ENCODE measurements at regions of chrX and their contacts with region 1.

Region 1: DNA sequence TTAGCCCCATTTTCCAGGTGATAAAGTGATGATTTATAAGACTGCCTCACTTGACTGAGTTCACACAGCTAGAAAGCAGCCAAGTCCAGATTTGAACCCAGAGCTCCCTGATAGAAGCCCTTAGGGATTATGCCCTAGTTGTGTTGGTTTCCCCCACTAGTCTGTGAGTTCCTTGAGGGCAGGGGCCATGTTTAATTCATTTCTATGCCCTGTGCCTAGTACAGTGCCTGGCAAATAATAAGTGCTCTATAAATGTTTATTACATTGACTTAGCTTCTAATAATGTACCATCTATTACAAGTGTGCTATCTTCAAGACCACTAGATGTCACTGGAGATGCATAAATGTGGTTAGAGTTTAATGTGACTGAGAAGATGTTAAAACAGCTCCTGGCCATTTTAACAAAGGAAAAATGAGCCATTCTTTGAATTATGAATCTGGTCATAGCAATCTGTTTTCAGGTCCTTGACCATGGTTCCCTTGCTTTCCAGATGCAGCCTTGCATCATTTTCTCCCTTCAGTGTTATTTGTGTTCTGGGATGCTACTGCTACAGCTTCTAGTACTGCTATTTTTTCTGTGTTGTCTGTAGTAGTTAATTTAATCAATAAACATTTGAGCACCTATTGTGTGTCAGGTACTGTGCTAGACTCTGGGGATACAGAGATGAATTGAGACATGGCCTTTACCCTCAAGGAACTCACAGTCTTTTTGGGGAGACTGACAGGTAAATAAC is 43.2 kb downstream of the SLC9A6 start:
- DNase-seq: peak; percentile 28 to 55
- ATAC-seq: peak; percentile 74 to 86; a peak in 5 of 6 replicates
- H3K4me3 ChIP-seq: no peak overlapping the region
- H3K27ac ChIP-seq: no peak overlapping the region
- H3K4me1 ChIP-seq: no peaks in the 10 kb centered on the region
- CTCF ChIP-seq: peak; percentile 79
- EP300 ChIP-seq: no peak
- POLR2A ChIP-seq: no peak
- RAD21 ChIP-seq: peak; percentile 77 to 80

Region 2: DNA sequence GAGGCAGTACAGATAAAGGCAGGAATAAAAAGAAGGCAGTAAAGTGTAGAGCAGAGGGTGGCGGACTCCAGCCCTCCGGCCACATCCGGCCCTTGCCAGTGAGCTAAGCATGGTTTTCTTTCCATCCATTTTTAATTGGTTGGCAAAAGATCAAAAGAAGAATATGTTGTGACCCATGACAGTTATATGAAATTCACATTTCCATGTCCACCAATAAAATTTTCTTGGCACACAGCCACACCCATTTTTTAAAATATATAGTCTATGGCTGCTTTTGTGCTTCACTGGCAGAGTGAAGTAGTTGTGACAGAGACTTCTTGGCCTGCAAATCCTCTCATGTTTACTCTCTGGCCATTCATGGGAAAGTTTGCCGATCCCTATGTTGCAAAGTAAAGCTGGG is 13.4 kb before region 1 on chrX:
- CTCF ChIA-PET with region 1: interaction called, 18 read pairs
- POLR2A ChIA-PET with region 1: no interaction called
- DNase-seq: no peak
- ATAC-seq: no peak
- H3K4me3 ChIP-seq: no peak overlapping the region
- H3K27ac ChIP-seq: no peak overlapping the region
- H3K4me1 ChIP-seq: no peaks in the 10 kb centered on the region
- CTCF ChIP-seq: no peak
- EP300 ChIP-seq: no peak
- POLR2A ChIP-seq: no peak
- RAD21 ChIP-seq: no peak

Region 3: DNA sequence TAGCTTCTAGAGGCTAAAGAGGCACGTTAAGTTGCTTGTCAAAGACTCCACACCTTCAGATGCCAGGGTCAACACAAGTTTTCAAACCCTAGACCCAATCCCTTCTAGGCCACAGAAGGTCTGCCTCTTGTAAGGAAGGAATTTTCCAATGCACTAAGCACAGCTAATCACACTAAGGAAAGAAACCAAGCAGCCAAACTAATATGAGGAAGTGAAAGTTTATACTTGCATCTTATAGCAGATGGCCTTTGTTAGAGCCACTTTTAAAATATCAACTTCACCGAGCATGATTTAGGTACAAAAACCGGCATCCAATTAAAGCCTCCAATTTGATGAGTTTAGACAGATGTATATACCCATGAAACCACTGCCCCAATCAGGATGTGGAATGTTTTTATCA is 128.8 kb after region 1 on chrX:
- CTCF ChIA-PET with region 1: interaction called, 124 read pairs
- POLR2A ChIA-PET with region 1: no interaction called
- DNase-seq: no peak
- ATAC-seq: no peak
- H3K4me3 ChIP-seq: no peak overlapping the region
- H3K27ac ChIP-seq: no peak overlapping the region
- H3K4me1 ChIP-seq: no peaks in the 10 kb centered on the region
- CTCF ChIP-seq: no peak
- EP300 ChIP-seq: no peak
- POLR2A ChIP-seq: no peak
- RAD21 ChIP-seq: no peak

Region 4: GRCh38 chrX:136168929-136169735 is 140.7 kb after region 1 on chrX:
- CTCF ChIA-PET with region 1: interaction called, 124 read pairs
- POLR2A ChIA-PET with region 1: no interaction called
- DNase-seq: no peak
- ATAC-seq: no peak
- H3K4me3 ChIP-seq: no peak overlapping the region
- H3K27ac ChIP-seq: no peak overlapping the region
- H3K4me1 ChIP-seq: no peaks in the 10 kb centered on the region
- CTCF ChIP-seq: no peak
- EP300 ChIP-seq: no peak
- POLR2A ChIP-seq: no peak
- RAD21 ChIP-seq: no peak

Region 5: DNA sequence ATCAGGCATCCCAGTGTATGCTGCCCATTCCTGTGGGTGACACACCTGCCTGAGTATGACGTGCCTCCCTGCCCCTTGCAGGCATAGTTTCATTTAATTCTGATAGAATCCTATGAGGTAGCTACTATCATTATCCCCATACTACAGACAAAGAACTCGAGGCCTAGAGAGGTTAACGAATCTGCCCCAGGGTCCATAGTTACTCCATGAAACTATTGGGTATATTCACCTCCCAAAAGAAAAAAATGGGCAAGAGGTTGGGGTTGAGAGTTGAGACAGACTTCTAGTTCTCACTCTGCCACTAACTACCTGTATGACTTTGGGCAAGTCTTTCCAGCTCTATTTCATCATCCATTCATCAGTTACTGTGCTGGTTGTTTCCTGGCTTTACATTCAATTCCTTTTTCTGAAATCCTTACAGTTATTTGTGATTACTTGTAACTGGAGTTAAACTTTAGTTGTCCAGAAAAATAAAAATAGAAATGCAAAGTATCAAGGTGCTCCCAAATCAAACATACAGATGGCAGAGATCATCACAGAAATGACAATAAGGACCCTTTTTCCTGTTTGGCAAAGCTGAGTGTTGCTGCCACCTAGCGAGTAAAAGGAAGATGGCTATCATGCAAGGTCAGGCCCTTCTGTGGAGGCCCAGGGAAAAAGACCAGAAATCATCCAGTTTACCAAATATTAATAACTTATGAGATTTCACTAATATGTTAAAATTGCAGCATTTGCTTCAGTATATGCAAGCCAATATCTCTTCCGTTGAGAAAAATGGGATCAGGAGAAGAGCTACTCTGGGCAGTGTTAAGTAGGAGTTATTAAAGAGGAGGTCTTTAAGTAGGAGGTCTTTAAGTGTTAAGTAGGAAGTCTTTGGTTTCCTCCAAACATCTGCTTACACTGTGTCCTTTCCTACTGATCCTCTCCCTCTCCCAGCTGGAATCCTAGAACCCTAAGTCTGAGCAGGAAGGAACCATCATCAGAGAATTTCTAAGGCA is 239.9 kb after region 1 on chrX:
- CTCF ChIA-PET with region 1: interaction called, 44 read pairs
- POLR2A ChIA-PET with region 1: no interaction called
- DNase-seq: peak; percentile 15 to 52
- ATAC-seq: peak; percentile 80 to 86; a peak in 5 of 6 replicates
- H3K4me3 ChIP-seq: no peak overlapping the region
- H3K27ac ChIP-seq: no peak overlapping the region
- H3K4me1 ChIP-seq: no peaks in the 10 kb centered on the region
- CTCF ChIP-seq: peak; percentile 68
- EP300 ChIP-seq: no peak
- POLR2A ChIP-seq: no peak
- RAD21 ChIP-seq: peak; percentile 67 to 74

Measured in A549 (cell line).